ENCODE measurements at regions of chr4 and their contacts with region 1.

Region 1: GRCh38 chr4:20251796-20252655 is at the start of gene SLIT2:
- DNase-seq: peak in 1 of 2 experiments; percentile 84
- H3K4me3 ChIP-seq: peak within 1 kb of the TSS; percentile 50
- H3K27ac ChIP-seq: no peak within 1 kb of the TSS
- H3K4me1 ChIP-seq: no peaks in the 10 kb centered on the region
- H3K27me3 ChIP-seq: peaks cover 8% of the 10 kb centered on the region; the same call in 1 of the 2 replicates
- CTCF ChIP-seq: no peak
- total RNA-seq, gene SLIT2: 4.8 and 5.3 TPM in 2 replicates

Region 2: DNA sequence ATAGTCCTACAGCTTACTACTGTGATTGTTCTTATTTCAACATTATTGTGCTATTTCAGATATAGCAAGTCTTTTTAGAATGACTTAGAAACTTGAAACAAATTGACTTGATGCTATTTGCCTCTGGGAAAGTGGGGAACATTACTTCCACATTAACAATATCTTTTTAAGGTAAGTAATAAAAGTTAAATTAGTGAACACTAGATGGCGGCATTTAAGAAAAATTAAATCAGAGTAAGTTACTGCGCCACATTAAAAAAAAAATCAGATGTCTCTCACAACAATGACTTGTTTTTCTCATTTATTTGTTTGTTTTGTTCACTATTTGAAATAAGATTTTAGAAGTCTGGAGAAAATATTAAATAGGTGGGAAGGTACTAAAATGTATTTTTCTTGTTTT is 1027.2 kb before region 1 on chr4:
- CTCF ChIA-PET with region 1: no interaction called
- POLR2A ChIA-PET with region 1: no interaction called
- intact Hi-C with region 1: loop called (anchors 2 kb)
- DNase-seq: peak in 1 of 2 experiments; percentile 35
- H3K4me3 ChIP-seq: no peak overlapping the region
- H3K27ac ChIP-seq: no peak overlapping the region
- H3K4me1 ChIP-seq: no peaks in the 10 kb centered on the region
- H3K27me3 ChIP-seq: no peaks in the 10 kb centered on the region
- CTCF ChIP-seq: peak; percentile 52

Region 3: GRCh38 chr4:19486400-19486799 is 765.6 kb before region 1 on chr4:
- CTCF ChIA-PET with region 1: no interaction called
- POLR2A ChIA-PET with region 1: no interaction called
- intact Hi-C with region 1: loop called (anchors 2 kb)
- DNase-seq: peak; percentile 35 to 44
- H3K4me3 ChIP-seq: no peak overlapping the region
- H3K27ac ChIP-seq: no peak overlapping the region
- H3K4me1 ChIP-seq: no peaks in the 10 kb centered on the region
- H3K27me3 ChIP-seq: no peaks in the 10 kb centered on the region
- CTCF ChIP-seq: no peak

Region 4: GRCh38 chr4:19807505-19807904 is 444.5 kb before region 1 on chr4:
- CTCF ChIA-PET with region 1: no interaction called
- POLR2A ChIA-PET with region 1: no interaction called
- intact Hi-C with region 1: loop called (anchors 1 kb)
- DNase-seq: peak in 1 of 2 experiments; percentile 66
- H3K4me3 ChIP-seq: no peak overlapping the region
- H3K27ac ChIP-seq: no peak overlapping the region
- H3K4me1 ChIP-seq: no peaks in the 10 kb centered on the region
- H3K27me3 ChIP-seq: no peaks in the 10 kb centered on the region
- CTCF ChIP-seq: no peak

Region 5: GRCh38 chr4:20159516-20159915 is 92.5 kb before region 1 on chr4:
- CTCF ChIA-PET with region 1: no interaction called
- POLR2A ChIA-PET with region 1: no interaction called
- intact Hi-C with region 1: no loop called
- DNase-seq: no peak
- H3K4me3 ChIP-seq: no peak overlapping the region
- H3K27ac ChIP-seq: no peak overlapping the region
- H3K4me1 ChIP-seq: no peaks in the 10 kb centered on the region
- H3K27me3 ChIP-seq: no peaks in the 10 kb centered on the region
- CTCF ChIP-seq: no peak

Region 6: GRCh38 chr4:20422398-20422797 is 170.4 kb after region 1 on chr4:
- CTCF ChIA-PET with region 1: no interaction called
- POLR2A ChIA-PET with region 1: no interaction called
- intact Hi-C with region 1: loop called (anchors 5 kb)
- DNase-seq: peak in 1 of 2 experiments; percentile 56
- H3K4me3 ChIP-seq: no peak overlapping the region
- H3K27ac ChIP-seq: no peak overlapping the region
- H3K4me1 ChIP-seq: no peaks in the 10 kb centered on the region
- H3K27me3 ChIP-seq: no peaks in the 10 kb centered on the region
- CTCF ChIP-seq: peak; percentile 46